ENCODE measurements at regions of chr17 and their contacts with region 1.

Region 1: GRCh38 chr17:71460943-71461342 is 659.9 kb upstream of the SOX9 start:
- DNase-seq: no peak
- ATAC-seq: no peak
- H3K4me3 ChIP-seq: no peak overlapping the region
- H3K27ac ChIP-seq: no peak overlapping the region
- H3K4me1 ChIP-seq: no peaks in the 10 kb centered on the region
- H3K27me3 ChIP-seq: no peaks in the 10 kb centered on the region
- CTCF ChIP-seq: peak in 9 of 12 donors; percentile 25 to 51 (median 34)
- POLR2A ChIP-seq: no peak

Region 2: GRCh38 chr17:70767102-70767701 is 693.7 kb before region 1 on chr17:
- intact Hi-C with region 1: loop called in 3 of 10 experiments (anchors 5 to 10 kb)
- DNase-seq: no peak
- ATAC-seq: no peak
- H3K4me3 ChIP-seq: no peak overlapping the region
- H3K27ac ChIP-seq: no peak overlapping the region
- H3K4me1 ChIP-seq: no peaks in the 10 kb centered on the region
- H3K27me3 ChIP-seq: no peaks in the 10 kb centered on the region
- CTCF ChIP-seq: peak in 10 of 12 donors; percentile 41 to 64 (median 49)
- POLR2A ChIP-seq: no peak

Region 3: DNA sequence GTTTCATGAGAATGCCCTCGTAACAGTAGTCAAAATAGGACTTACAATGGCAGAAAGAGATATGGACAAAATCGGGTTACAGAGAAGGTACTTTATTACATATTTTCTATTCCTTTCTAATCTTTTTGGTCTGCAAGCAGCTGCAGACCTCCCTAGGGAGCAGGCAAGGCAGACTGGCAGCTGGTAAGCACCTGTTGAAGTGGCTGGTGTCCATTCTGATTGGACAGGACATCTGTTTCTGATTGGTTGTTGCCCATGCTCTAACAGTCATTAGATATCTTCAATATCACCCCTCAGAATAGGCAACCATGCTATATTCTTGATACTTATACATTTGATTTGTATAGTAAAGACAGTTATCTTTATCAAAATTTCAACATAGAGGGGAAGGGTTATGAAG is 685.3 kb before region 1 on chr17:
- intact Hi-C with region 1: loop called in 1 of 10 experiments (anchors 10 kb)
- DNase-seq: peak in 1 of 5 donors; percentile 35
- ATAC-seq: peak in 1 of 4 donors; percentile 59
- H3K4me3 ChIP-seq: no peak overlapping the region
- H3K27ac ChIP-seq: no peak overlapping the region
- H3K4me1 ChIP-seq: no peaks in the 10 kb centered on the region
- H3K27me3 ChIP-seq: no peaks in the 10 kb centered on the region
- CTCF ChIP-seq: no peak
- POLR2A ChIP-seq: no peak

Region 4: DNA sequence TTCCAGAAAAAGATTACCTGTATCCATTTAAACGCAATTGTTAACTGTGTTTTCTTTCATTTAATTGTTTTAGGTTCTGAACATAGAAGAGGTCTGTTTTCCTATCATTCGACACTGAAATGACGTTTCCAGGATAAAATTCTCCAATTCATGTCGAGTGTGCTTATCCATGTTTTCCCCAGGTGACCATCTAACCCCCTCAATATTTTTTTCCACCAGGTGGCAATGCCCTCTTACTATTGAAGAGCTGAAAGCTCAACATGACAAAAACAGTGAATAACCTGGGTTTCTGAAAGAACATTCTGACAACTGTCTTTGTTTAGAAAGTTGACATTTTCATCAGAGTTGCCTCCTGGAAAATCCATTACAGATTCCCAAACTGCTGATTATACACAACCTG is 342.9 kb before region 1 on chr17:
- intact Hi-C with region 1: loop called in 7 of 10 experiments (anchors 5 to 10 kb)
- DNase-seq: no peak
- ATAC-seq: no peak
- H3K4me3 ChIP-seq: no peak overlapping the region
- H3K27ac ChIP-seq: no peak overlapping the region
- H3K4me1 ChIP-seq: no peaks in the 10 kb centered on the region
- H3K27me3 ChIP-seq: peaks cover 0 to 6% (median 0%) of the 10 kb centered on the region in 9 donors
- CTCF ChIP-seq: peak in 11 of 12 donors; percentile 17 to 50 (median 36)
- POLR2A ChIP-seq: no peak

Region 5: DNA sequence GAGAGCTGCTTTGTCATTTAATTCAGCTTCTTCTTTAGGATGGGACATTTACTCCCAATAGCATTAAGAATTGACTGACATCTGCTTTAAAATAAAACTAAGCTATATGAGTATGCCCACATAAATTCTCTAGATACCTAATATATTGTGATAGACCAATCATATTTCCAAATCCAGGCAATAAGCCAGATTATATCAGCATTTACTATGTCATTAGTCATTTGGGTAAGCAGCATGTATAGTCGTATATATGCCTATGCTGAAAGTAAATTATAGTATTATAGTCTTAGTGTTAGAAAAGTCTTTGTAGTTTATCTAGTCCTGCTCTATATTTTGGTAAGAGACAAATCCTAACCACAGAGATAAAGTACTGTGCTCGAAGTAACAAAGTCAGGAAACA is 333.5 kb before region 1 on chr17:
- intact Hi-C with region 1: loop called in 2 of 10 experiments (anchors 10 kb)
- DNase-seq: no peak
- ATAC-seq: no peak
- H3K4me3 ChIP-seq: no peak overlapping the region
- H3K27ac ChIP-seq: no peak overlapping the region
- H3K4me1 ChIP-seq: no peaks in the 10 kb centered on the region
- H3K27me3 ChIP-seq: no peaks in the 10 kb centered on the region
- CTCF ChIP-seq: no peak
- POLR2A ChIP-seq: no peak

Region 6: DNA sequence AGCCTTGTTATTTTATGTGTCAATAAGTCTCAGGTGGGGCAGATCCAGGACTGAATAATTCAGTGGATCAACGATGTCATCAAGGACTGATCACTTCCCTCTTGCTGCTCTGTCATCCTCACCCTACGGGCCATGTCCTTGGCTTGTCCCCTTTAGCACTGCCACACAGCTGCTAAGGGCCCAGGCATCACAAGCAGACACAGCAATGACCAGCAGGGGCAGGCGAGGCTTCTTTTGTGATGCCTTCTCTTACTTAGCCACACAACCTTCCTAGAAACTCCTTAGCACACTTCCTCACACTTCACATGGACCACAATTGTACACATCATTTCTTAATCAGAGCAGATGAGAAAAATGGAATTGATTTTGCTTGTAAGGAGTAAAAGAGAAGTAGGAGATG is 303.6 kb after region 1 on chr17:
- intact Hi-C with region 1: no loop called
- DNase-seq: peak in 2 of 5 donors; percentile 32 to 37
- ATAC-seq: peak in 3 of 4 donors; percentile 41 to 81 (median 72)
- H3K4me3 ChIP-seq: no peak overlapping the region
- H3K27ac ChIP-seq: no peak overlapping the region
- H3K4me1 ChIP-seq: no peaks in the 10 kb centered on the region
- H3K27me3 ChIP-seq: no peaks in the 10 kb centered on the region
- CTCF ChIP-seq: peak in 6 of 12 donors; percentile 7 to 41 (median 32)
- POLR2A ChIP-seq: no peak